K562 (cell line): ENCODE measurements at regions of chr7 and their contacts with region 1.

Region 1: DNA sequence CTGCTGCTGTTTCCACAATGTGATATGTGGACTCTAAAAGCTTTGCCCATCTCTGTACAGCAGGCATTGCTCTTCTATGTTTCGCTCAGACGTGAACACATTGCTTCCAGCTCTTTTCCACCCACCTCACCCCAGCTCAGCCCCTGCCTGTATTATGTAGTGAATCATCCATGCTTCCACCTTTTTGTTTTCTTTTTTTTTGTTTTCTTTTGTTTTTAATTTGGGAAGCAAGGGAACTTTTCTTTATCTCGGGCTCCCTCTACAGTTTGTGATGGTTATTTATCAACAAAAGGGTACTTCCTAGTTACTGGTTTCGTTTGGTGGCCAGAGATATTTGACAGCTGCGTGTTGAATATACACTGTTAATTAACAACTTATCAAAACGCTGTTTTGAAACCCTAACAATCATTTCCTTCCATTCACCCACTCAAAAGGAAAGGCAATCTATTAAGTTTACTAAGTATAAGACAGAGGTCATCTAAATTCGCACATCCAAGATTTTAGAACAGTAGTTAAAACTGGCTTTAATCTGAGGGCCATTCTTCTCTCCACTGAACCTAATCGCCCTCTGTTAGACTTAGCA is 127.9 kb upstream of the STK17A start:
- DNase-seq: peak; percentile 28 to 45 (median 36)
- ATAC-seq: peak; percentile 70; the same call in 2 of the 3 replicates
- H3K4me3 ChIP-seq: no peak overlapping the region
- H3K27ac ChIP-seq: no peak overlapping the region
- H3K4me1 ChIP-seq: no peaks in the 10 kb centered on the region; a peak in 1 of 5 replicates
- H3K27me3 ChIP-seq: peaks cover 20 to 21% of the 10 kb centered on the region in 2 experiments; a peak in 4 of 5 replicates
- CTCF ChIP-seq: peak; percentile 39 to 73 (median 51); a peak in 5 of 6 replicates
- EP300 ChIP-seq: no peak
- POLR2A ChIP-seq: no peak
- RAD21 ChIP-seq: peak; percentile 28 to 55; a peak in 3 of 4 replicates

Region 2: DNA sequence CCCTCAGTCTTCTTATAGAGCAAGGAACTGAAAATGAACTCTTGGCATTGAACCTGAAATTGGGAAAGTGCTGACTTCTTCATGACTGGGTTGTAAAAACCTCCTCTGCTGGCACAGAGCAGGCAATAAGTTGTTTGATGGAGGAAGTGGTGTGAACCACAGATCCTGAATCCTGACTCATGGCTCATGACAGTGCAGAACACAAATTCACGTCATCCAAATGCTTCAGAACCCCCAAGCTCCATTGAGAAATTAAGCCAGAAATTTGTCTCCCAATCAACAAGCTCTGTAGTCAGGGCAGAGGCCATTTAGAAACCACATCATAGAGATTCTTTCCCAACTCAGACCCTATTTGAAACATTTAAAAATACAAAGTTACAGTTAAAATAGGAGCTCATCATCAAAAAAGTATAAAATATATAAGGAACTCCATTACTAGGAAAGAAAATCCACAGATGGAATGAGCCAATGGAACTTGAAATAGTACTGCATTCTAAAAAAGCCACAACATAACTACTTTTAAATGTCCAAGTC is 117.6 kb after region 1 on chr7:
- CTCF ChIA-PET with region 1: no interaction called
- POLR2A ChIA-PET with region 1: no interaction called
- in situ Hi-C with region 1: no loop called
- intact Hi-C with region 1: loop called (anchors 5 kb)
- DNase-seq: peak; percentile 33 to 82 (median 50)
- ATAC-seq: peak; percentile 89
- H3K4me3 ChIP-seq: no peak overlapping the region
- H3K27ac ChIP-seq: peak overlapping the region; percentile 82
- H3K4me1 ChIP-seq: peaks cover 4 to 18% of the 10 kb centered on the region in 2 experiments
- H3K27me3 ChIP-seq: no peaks in the 10 kb centered on the region
- CTCF ChIP-seq: no peak
- EP300 ChIP-seq: peak; percentile 64; the same call in 1 of the 2 replicates
- POLR2A ChIP-seq: peak; percentile 17; the same call in 1 of the 2 replicates
- RAD21 ChIP-seq: no peak

Region 3: GRCh38 chr7:43700059-43700501 is 245.1 kb after region 1 on chr7:
- CTCF ChIA-PET with region 1: interaction called, 3 read pairs
- POLR2A ChIA-PET with region 1: no interaction called
- in situ Hi-C with region 1: no loop called
- intact Hi-C with region 1: loop called (anchors 1 kb)
- DNase-seq: peak in 2 of 4 experiments; percentile 28 to 37
- ATAC-seq: peak; percentile 79
- H3K4me3 ChIP-seq: no peak overlapping the region
- H3K27ac ChIP-seq: no peak overlapping the region
- H3K4me1 ChIP-seq: no peaks in the 10 kb centered on the region
- H3K27me3 ChIP-seq: no peaks in the 10 kb centered on the region
- CTCF ChIP-seq: peak; percentile 46 to 79 (median 50); a peak in 4 of 6 replicates
- EP300 ChIP-seq: no peak
- POLR2A ChIP-seq: no peak
- RAD21 ChIP-seq: peak; percentile 77 to 84